ENCODE measurements at regions of chr6 and their contacts with region 1.

Region 1: GRCh38 chr6:49531774-49532569 is 18.5 kb upstream of the C6orf141 start:
- DNase-seq: no peak
- ATAC-seq: peak; percentile 54 to 64
- H3K4me3 ChIP-seq: peak overlapping the region in 2 of 4 donors; percentile 6 to 24
- H3K27ac ChIP-seq: no peak overlapping the region
- H3K4me1 ChIP-seq: no peaks in the 10 kb centered on the region
- H3K27me3 ChIP-seq: no peaks in the 10 kb centered on the region
- CTCF ChIP-seq: peak; percentile 27 to 71 (median 55)
- POLR2A ChIP-seq: no peak

Region 2: GRCh38 chr6:49606696-49607390 is 74.9 kb after region 1 on chr6:
- in situ Hi-C with region 1: no loop called
- intact Hi-C with region 1: loop called (anchors 1 kb)
- DNase-seq: no peak
- ATAC-seq: peak in 1 of 2 donors; percentile 30
- H3K4me3 ChIP-seq: no peak overlapping the region
- H3K27ac ChIP-seq: no peak overlapping the region
- H3K4me1 ChIP-seq: no peaks in the 10 kb centered on the region
- H3K27me3 ChIP-seq: no peaks in the 10 kb centered on the region
- CTCF ChIP-seq: peak; percentile 30 to 69 (median 38)
- POLR2A ChIP-seq: no peak

Region 3: GRCh38 chr6:49849213-49849907 is 317.4 kb after region 1 on chr6:
- in situ Hi-C with region 1: loop called in 2 of 4 experiments (anchors 10 to 25 kb)
- intact Hi-C with region 1: loop called (anchors 5 kb)
- DNase-seq: no peak
- ATAC-seq: peak in 1 of 2 donors; percentile 53
- H3K4me3 ChIP-seq: no peak overlapping the region
- H3K27ac ChIP-seq: no peak overlapping the region
- H3K4me1 ChIP-seq: no peaks in the 10 kb centered on the region
- H3K27me3 ChIP-seq: no peaks in the 10 kb centered on the region
- CTCF ChIP-seq: peak; percentile 21 to 70 (median 45)
- POLR2A ChIP-seq: no peak

Region 4: DNA sequence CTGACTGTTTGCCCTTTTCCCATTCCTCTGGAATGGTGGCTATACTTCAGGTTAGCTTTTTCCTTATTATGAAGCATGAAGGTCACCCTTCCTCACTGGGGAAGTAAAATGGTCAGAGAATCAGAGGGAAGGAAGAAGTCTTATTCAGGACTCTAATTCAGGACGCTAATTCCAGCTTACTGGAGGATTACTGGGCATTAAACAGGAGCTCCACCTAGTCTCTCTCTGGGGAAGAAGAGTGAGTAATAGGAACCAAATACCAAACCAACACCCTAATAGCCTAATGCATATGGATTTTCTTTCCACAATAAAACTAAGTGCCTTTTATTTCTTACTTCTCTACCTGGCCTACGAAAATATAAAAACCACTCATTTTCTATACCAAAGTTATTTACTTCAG is 324.3 kb after region 1 on chr6:
- in situ Hi-C with region 1: loop called in 1 of 4 experiments (anchors 10 kb)
- intact Hi-C with region 1: no loop called
- DNase-seq: no peak
- ATAC-seq: no peak
- H3K4me3 ChIP-seq: no peak overlapping the region
- H3K27ac ChIP-seq: no peak overlapping the region
- H3K4me1 ChIP-seq: no peaks in the 10 kb centered on the region
- H3K27me3 ChIP-seq: no peaks in the 10 kb centered on the region
- CTCF ChIP-seq: no peak
- POLR2A ChIP-seq: no peak

Measured in gastrocnemius medialis (tissue), 4 donors.